K562 (cell line): ENCODE measurements at regions of chr3 and their contacts with region 1.

Region 1: DNA sequence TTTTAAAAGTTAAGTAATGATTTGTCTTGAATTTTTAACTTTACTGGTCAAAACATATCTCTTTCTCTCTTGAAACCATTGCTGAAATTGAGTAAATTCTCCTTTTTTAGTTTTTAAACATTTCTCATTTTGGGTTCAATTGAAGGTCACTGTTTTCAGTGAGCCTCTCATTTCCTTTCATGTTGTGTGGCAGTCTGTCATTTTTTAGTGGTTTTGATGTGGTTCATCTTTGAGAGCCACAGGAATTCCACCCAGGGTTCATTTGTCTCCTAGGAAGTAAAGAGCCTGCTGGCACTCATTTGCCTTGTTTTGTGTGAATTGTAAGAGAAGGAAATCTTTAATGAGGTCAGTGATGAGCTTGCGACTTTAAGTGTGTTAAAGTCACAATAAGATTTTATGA is 10.4 kb downstream of the CLDN11 start:
- DNase-seq: no peak
- ATAC-seq: no peak
- H3K4me3 ChIP-seq: no peak overlapping the region
- H3K27ac ChIP-seq: no peak overlapping the region
- H3K4me1 ChIP-seq: peaks cover 5 to 15% of the 10 kb centered on the region in 2 experiments; a peak in 4 of 5 replicates
- H3K27me3 ChIP-seq: no peaks in the 10 kb centered on the region; a peak in 1 of 5 replicates
- CTCF ChIP-seq: no peak
- EP300 ChIP-seq: no peak
- POLR2A ChIP-seq: no peak
- RAD21 ChIP-seq: no peak

Region 2: GRCh38 chr3:170499565-170500156 is 70.6 kb after region 1 on chr3:
- CTCF ChIA-PET with region 1: no interaction called
- POLR2A ChIA-PET with region 1: no interaction called
- in situ Hi-C with region 1: no loop called
- intact Hi-C with region 1: loop called (anchors 5 kb)
- DNase-seq: peak; percentile 22 to 64 (median 44)
- ATAC-seq: peak; percentile 98
- H3K4me3 ChIP-seq: no peak overlapping the region
- H3K27ac ChIP-seq: no peak overlapping the region
- H3K4me1 ChIP-seq: peaks cover 0 to 10% of the 10 kb centered on the region in 2 experiments; a peak in 2 of 5 replicates
- H3K27me3 ChIP-seq: no peaks in the 10 kb centered on the region; a peak in 1 of 5 replicates
- CTCF ChIP-seq: peak; percentile 73 to 76 (median 75)
- EP300 ChIP-seq: no peak
- POLR2A ChIP-seq: no peak
- RAD21 ChIP-seq: peak; percentile 60 to 69